Esophagus muscularis mucosa (tissue), 4 donors: ENCODE measurements at regions of chrX and their contacts with region 1.

Region 1: DNA sequence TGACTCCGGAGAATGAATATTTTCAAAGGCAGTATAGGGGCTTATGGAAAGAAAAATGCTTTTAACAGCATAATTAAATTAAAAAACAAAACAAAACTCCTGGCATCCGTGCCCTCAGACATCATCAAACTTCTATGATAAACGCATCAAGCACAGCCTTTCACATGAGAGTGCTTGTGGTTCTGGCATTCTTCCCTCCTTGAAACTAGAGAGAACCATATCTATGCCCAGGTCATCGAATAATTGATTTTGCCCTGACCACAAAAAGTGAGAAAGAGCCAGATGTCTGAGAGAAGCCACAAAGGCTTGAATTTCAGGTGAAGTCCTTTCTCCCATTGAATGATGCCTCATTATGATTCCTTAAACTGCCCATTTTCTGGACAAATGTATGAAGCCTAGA is 286.8 kb downstream of the CBLL2 start:
- DNase-seq: no peak
- H3K4me3 ChIP-seq: no peak overlapping the region
- H3K27ac ChIP-seq: no peak overlapping the region
- H3K4me1 ChIP-seq: no peaks in the 10 kb centered on the region
- H3K27me3 ChIP-seq: no peaks in the 10 kb centered on the region
- CTCF ChIP-seq: no peak
- EP300 ChIP-seq: no peak
- POLR2A ChIP-seq: no peak

Region 2: GRCh38 chrX:22616867-22617266 is 57.4 kb after region 1 on chrX:
- intact Hi-C with region 1: no loop called
- DNase-seq: no peak
- H3K4me3 ChIP-seq: no peak overlapping the region
- H3K27ac ChIP-seq: no peak overlapping the region
- H3K4me1 ChIP-seq: no peaks in the 10 kb centered on the region
- H3K27me3 ChIP-seq: no peaks in the 10 kb centered on the region
- CTCF ChIP-seq: no peak
- EP300 ChIP-seq: no peak
- POLR2A ChIP-seq: no peak

Region 3: GRCh38 chrX:23559975-23560374 is 1000.5 kb after region 1 on chrX:
- intact Hi-C with region 1: loop called (anchors 10 kb)
- DNase-seq: no peak
- H3K4me3 ChIP-seq: no peak overlapping the region
- H3K27ac ChIP-seq: no peak overlapping the region
- H3K4me1 ChIP-seq: no peaks in the 10 kb centered on the region
- H3K27me3 ChIP-seq: no peaks in the 10 kb centered on the region
- CTCF ChIP-seq: no peak
- EP300 ChIP-seq: no peak
- POLR2A ChIP-seq: no peak